ENCODE measurements at regions of chr5 and their contacts with region 1.

Region 1: GRCh38 chr5:14581333-14581890 is at the start of gene OTULINL:
- DNase-seq: peak; percentile 90 to 92
- H3K4me3 ChIP-seq: peak within 1 kb of the TSS; percentile 57
- H3K4me3 Mint-ChIP-seq: peak within 1 kb of the TSS; percentile 73
- H3K27ac Mint-ChIP-seq: peak within 1 kb of the TSS; percentile 48
- H3K4me1 ChIP-seq: peaks cover 9% of the 10 kb centered on the region; the same call in 1 of the 2 replicates
- H3K4me1 Mint-ChIP-seq: peaks cover 6% of the 10 kb centered on the region
- H3K27me3 ChIP-seq: no peaks in the 10 kb centered on the region
- H3K27me3 Mint-ChIP-seq: peaks cover 2% of the 10 kb centered on the region
- CTCF ChIP-seq: no peak
- total RNA-seq, gene OTULINL: 16.3 and 18.3 TPM in 2 replicates

Region 2: DNA sequence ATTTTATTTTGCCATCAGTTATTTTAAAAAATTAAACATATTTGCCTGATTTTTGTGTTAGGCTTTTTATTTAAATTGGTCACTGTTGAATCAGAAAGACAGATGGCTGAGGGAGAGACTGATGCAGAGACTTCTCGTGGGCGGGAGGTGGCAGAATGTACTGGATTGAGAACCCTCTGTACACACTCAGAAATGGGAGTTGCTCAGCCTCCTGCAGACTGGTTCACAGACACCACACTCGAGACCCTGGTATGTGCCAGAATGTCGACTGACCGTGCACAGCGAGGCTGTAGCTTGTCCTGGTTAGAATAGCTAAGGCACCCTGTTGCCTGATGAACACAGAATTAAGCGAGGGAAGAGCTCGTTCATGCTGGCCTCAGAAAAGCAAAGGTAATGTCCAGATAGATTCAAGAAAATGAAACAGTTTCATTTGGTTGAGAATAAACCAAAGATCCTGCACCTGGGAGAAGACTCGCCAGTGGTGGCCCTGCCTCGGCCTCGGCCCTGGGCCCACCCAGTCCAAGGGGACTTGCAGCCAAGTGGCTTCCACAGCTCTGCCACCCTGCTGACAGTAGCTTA is 71.2 kb before region 1 on chr5:
- CTCF ChIA-PET with region 1: interaction called, 3 read pairs
- POLR2A ChIA-PET with region 1: no interaction called
- intact Hi-C with region 1: loop called (anchors 5 kb)
- DNase-seq: no peak
- H3K4me3 ChIP-seq: no peak overlapping the region
- H3K4me3 Mint-ChIP-seq: no peak overlapping the region
- H3K27ac Mint-ChIP-seq: no peak overlapping the region
- H3K4me1 ChIP-seq: no peaks in the 10 kb centered on the region
- H3K4me1 Mint-ChIP-seq: no peaks in the 10 kb centered on the region
- H3K27me3 ChIP-seq: no peaks in the 10 kb centered on the region
- H3K27me3 Mint-ChIP-seq: no peaks in the 10 kb centered on the region
- CTCF ChIP-seq: no peak

Region 3: GRCh38 chr5:14552017-14552416 is 29.4 kb before region 1 on chr5:
- CTCF ChIA-PET with region 1: interaction called, 7 read pairs
- POLR2A ChIA-PET with region 1: interaction called, 3 read pairs
- intact Hi-C with region 1: loop called (anchors 1 kb)
- DNase-seq: no peak
- H3K4me3 ChIP-seq: no peak overlapping the region
- H3K4me3 Mint-ChIP-seq: no peak overlapping the region
- H3K27ac Mint-ChIP-seq: no peak overlapping the region
- H3K4me1 ChIP-seq: peaks cover 16% of the 10 kb centered on the region
- H3K4me1 Mint-ChIP-seq: peaks cover 15% of the 10 kb centered on the region
- H3K27me3 ChIP-seq: no peaks in the 10 kb centered on the region
- H3K27me3 Mint-ChIP-seq: no peaks in the 10 kb centered on the region
- CTCF ChIP-seq: no peak

Region 4: GRCh38 chr5:14595189-14595588 is 13.8 kb after region 1 on chr5:
- CTCF ChIA-PET with region 1: no interaction called
- POLR2A ChIA-PET with region 1: no interaction called
- intact Hi-C with region 1: no loop called
- DNase-seq: no peak
- H3K4me3 ChIP-seq: no peak overlapping the region
- H3K4me3 Mint-ChIP-seq: no peak overlapping the region
- H3K27ac Mint-ChIP-seq: no peak overlapping the region
- H3K4me1 ChIP-seq: no peaks in the 10 kb centered on the region
- H3K4me1 Mint-ChIP-seq: no peaks in the 10 kb centered on the region
- H3K27me3 ChIP-seq: no peaks in the 10 kb centered on the region
- H3K27me3 Mint-ChIP-seq: no peaks in the 10 kb centered on the region
- CTCF ChIP-seq: no peak

Region 5: GRCh38 chr5:15105796-15106393 is 524.5 kb after region 1 on chr5:
- CTCF ChIA-PET with region 1: no interaction called
- POLR2A ChIA-PET with region 1: no interaction called
- intact Hi-C with region 1: no loop called
- DNase-seq: peak; percentile 45 to 51
- H3K4me3 ChIP-seq: no peak overlapping the region
- H3K4me3 Mint-ChIP-seq: no peak overlapping the region
- H3K27ac Mint-ChIP-seq: no peak overlapping the region
- H3K4me1 ChIP-seq: no peaks in the 10 kb centered on the region
- H3K4me1 Mint-ChIP-seq: no peaks in the 10 kb centered on the region
- H3K27me3 ChIP-seq: no peaks in the 10 kb centered on the region
- H3K27me3 Mint-ChIP-seq: peaks cover 6% of the 10 kb centered on the region
- CTCF ChIP-seq: peak; percentile 57 to 79